Prostate gland (tissue), 2 donors: ENCODE measurements at regions of chr1 and their contacts with region 1.

Region 1: DNA sequence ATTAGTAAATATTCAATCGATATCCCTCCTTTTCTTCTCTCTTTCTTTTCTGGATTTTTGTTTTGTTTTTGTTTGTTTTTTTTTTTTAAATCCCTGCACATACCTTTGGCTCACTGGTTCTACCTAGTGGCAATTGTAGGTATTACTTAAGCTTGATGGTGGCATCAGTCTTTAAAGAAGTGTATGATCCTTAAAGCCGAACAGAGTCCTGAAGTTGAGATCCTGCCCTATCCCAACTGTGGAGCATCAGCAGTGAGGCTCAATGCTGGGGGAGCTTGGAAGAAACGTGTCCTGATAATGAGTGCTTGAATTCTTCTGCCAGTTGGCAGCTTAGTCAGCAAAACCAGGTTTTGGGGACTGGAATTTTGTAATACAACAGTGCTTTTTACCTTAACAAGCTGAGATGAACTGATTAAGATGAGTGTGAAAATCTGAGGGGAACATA is 60.8 kb downstream of the FASLG start:
- DNase-seq: no peak
- H3K4me3 ChIP-seq: no peak overlapping the region
- H3K27ac ChIP-seq: no peak overlapping the region
- H3K4me1 ChIP-seq: no peaks in the 10 kb centered on the region
- H3K27me3 ChIP-seq: no peaks in the 10 kb centered on the region
- CTCF ChIP-seq: peak in 3 of 4 experiments; percentile 40 to 67 (median 60)
- POLR2A ChIP-seq: no peak

Region 2: GRCh38 chr1:172449585-172450534 is 269.9 kb before region 1 on chr1:
- intact Hi-C with region 1: loop called (anchors 5 kb)
- DNase-seq: no peak
- H3K4me3 ChIP-seq: no peak overlapping the region
- H3K27ac ChIP-seq: no peak overlapping the region
- H3K4me1 ChIP-seq: no peaks in the 10 kb centered on the region
- H3K27me3 ChIP-seq: no peaks in the 10 kb centered on the region
- CTCF ChIP-seq: peak; percentile 48 to 78 (median 73)
- POLR2A ChIP-seq: no peak

Region 3: DNA sequence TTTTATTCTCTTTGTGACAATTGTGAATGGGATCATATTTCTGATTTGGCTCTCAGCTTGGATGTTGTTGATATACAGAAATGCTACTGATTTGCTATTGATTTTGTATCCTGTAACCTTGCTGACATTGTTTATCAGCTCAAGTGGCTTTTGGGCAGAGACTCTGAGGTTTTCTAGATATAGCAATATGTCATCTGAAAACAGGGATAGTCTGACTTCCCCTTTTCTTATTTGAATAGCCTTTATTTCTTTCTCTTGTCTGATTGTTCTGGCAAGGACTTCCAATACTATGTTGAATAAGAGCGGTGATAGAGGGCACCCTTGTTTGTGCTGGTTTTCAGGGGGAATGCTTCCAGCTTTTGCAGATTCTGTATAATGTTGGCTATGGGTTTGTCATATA is 90.0 kb after region 1 on chr1:
- intact Hi-C with region 1: no loop called
- DNase-seq: no peak
- H3K4me3 ChIP-seq: no peak overlapping the region
- H3K27ac ChIP-seq: no peak overlapping the region
- H3K4me1 ChIP-seq: no peaks in the 10 kb centered on the region
- H3K27me3 ChIP-seq: no peaks in the 10 kb centered on the region
- CTCF ChIP-seq: no peak
- POLR2A ChIP-seq: no peak